PC-9 (cell line): ENCODE measurements at regions of chr20 and their contacts with region 1.

Region 1: GRCh38 chr20:58746620-58747019 is 54.0 kb downstream of the NPEPL1 start:
- DNase-seq: no peak
- H3K4me3 ChIP-seq: no peak overlapping the region
- H3K27ac ChIP-seq: no peak overlapping the region
- H3K4me1 ChIP-seq: no peaks in the 10 kb centered on the region
- H3K27me3 ChIP-seq: peaks cover 93% of the 10 kb centered on the region
- CTCF ChIP-seq: no peak

Region 2: DNA sequence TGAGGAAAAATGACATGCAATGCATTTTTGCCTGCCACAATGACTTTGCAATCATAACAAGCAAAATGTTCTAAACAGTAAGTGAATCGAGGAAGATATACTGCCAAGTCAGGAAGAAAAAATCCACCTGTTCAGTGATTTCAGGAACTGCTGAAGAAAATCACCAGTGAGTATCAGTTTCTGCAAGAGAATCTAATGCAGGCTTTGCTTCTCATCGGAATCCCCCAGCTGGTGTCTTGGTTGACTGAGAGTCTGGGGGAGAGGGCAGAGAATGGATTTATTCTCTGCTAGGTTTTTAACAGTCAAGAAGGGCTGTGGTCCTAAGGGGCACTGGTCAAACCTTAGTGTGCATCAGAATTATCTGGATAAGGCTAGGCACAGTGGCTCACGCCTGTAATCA is 1575.0 kb after region 1 on chr20:
- CTCF ChIA-PET with region 1: no interaction called
- POLR2A ChIA-PET with region 1: interaction called, 34 read pairs
- intact Hi-C with region 1: no loop called
- DNase-seq: no peak
- H3K4me3 ChIP-seq: no peak overlapping the region
- H3K27ac ChIP-seq: no peak overlapping the region
- H3K4me1 ChIP-seq: no peaks in the 10 kb centered on the region
- H3K27me3 ChIP-seq: peaks cover 76% of the 10 kb centered on the region
- CTCF ChIP-seq: no peak